CD8-positive, alpha-beta T cell (primary cell): ENCODE measurements at regions of chr6 and their contacts with region 1.

Region 1: DNA sequence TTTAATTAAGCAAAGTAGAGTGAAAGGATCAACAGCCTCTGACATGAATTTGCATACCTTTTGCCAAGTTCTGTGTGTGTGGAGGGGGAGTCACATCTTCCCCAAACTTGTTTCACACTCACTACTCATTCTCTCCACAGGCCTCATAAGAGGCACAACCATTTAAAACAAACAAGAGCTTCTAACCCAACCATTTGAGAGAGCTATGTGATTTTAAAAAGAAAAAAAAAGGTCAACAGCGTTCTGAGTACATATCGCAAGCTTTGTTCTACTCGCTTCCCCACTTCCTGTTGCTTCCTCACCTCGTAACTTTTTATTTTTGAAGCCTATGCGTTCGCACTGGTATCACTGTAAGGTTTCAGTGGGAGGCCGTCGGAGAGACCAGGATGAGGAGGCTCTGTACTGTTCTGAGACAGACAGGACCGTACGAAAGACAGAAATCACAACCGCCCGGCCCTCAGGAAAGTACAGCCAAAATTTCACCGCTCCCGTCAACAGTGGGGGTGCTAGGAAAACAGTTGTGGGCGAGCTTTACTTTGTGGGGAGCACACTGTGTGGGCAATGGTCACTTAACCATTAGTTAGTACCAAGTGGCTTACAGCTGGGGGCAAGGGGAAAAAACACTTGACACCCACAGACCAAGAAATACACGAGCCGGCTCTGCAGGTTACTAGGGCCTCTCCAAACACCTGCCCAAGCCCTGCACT is 61.3 kb downstream of the TRERF1 start:
- DNase-seq: peak; percentile 22 to 88 (median 62)
- ATAC-seq: peak; percentile 77
- H3K4me3 ChIP-seq: peak overlapping the region; percentile 10 to 31
- H3K4me3 Mint-ChIP-seq: peak overlapping the region; percentile 80
- H3K27ac ChIP-seq: peak overlapping the region; percentile 74 to 86
- H3K27ac Mint-ChIP-seq: peak overlapping the region; percentile 100
- H3K4me1 ChIP-seq: peaks cover 99% of the 10 kb centered on the region
- H3K4me1 Mint-ChIP-seq: peaks cover 97% of the 10 kb centered on the region
- H3K27me3 ChIP-seq: no peaks in the 10 kb centered on the region
- H3K27me3 Mint-ChIP-seq: no peaks in the 10 kb centered on the region
- CTCF ChIP-seq: no peak

Region 2: GRCh38 chr6:42260972-42261371 is 129.4 kb before region 1 on chr6:
- CTCF ChIA-PET with region 1: interaction called, 11 read pairs
- POLR2A ChIA-PET with region 1: interaction called, 3 read pairs
- intact Hi-C with region 1: no loop called
- DNase-seq: peak in 6 of 9 experiments; percentile 35 to 70 (median 53)
- ATAC-seq: peak; percentile 81
- H3K4me3 ChIP-seq: no peak overlapping the region
- H3K4me3 Mint-ChIP-seq: no peak overlapping the region
- H3K27ac ChIP-seq: no peak overlapping the region
- H3K27ac Mint-ChIP-seq: peak overlapping the region; percentile 45
- H3K4me1 ChIP-seq: peaks cover 3% of the 10 kb centered on the region
- H3K4me1 Mint-ChIP-seq: peaks cover 12% of the 10 kb centered on the region
- H3K27me3 ChIP-seq: no peaks in the 10 kb centered on the region
- H3K27me3 Mint-ChIP-seq: no peaks in the 10 kb centered on the region
- CTCF ChIP-seq: peak; percentile 49

Region 3: DNA sequence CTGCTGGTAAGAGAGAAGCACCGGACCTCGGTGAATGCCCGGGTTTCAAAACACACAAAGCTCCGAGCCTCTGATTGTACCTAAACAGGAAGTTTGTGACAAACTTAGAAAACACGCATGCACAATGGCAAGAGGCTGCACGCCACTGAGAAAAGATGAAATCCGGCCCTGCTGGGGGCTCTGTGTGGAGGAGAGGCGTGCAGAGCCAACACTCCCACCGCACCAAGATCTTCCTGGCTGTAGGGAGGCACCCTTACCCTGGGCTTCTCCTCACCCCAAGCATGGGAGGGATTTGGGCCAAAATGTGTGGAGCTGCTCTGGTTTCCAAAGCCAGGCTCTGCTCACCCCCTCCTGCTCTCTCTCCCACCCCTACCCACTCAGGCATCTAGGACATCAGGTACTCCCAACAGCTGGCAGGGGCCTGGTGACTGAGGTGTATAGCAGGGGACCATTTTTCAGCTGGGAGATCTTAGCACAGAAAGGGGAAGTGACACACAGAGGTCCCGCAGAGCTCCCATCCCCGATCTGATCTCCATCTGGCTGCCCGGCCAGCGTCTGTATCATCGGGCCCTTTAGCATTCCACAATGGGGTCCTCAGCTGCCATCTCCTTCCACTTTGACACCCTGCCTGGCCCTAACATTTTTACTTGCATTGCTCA is 22.9 kb before region 1 on chr6:
- CTCF ChIA-PET with region 1: interaction called, 4 read pairs
- POLR2A ChIA-PET with region 1: interaction called, 60 read pairs
- intact Hi-C with region 1: loop called (anchors 1 to 2 kb)
- DNase-seq: peak in 5 of 9 experiments; percentile 17 to 66 (median 44)
- ATAC-seq: peak; percentile 36
- H3K4me3 ChIP-seq: peak overlapping the region; percentile 22 to 28
- H3K4me3 Mint-ChIP-seq: peak overlapping the region; percentile 81
- H3K27ac ChIP-seq: peak overlapping the region; percentile 44 to 82
- H3K27ac Mint-ChIP-seq: peak overlapping the region; percentile 92
- H3K4me1 ChIP-seq: peaks cover 61% of the 10 kb centered on the region
- H3K4me1 Mint-ChIP-seq: peaks cover 84% of the 10 kb centered on the region
- H3K27me3 ChIP-seq: no peaks in the 10 kb centered on the region
- H3K27me3 Mint-ChIP-seq: no peaks in the 10 kb centered on the region
- CTCF ChIP-seq: no peak

Region 4: GRCh38 chr6:42402184-42402583 is 11.8 kb after region 1 on chr6:
- CTCF ChIA-PET with region 1: interaction called, 30 read pairs
- POLR2A ChIA-PET with region 1: interaction called, 15 read pairs
- intact Hi-C with region 1: loop called in 1 of 2 experiments (anchors 1 kb)
- DNase-seq: peak in 6 of 9 experiments; percentile 34 to 65 (median 46)
- ATAC-seq: peak; percentile 75
- H3K4me3 ChIP-seq: no peak overlapping the region
- H3K4me3 Mint-ChIP-seq: peak overlapping the region; percentile 2
- H3K27ac ChIP-seq: peak overlapping the region in 1 of 2 experiments; percentile 59
- H3K27ac Mint-ChIP-seq: peak overlapping the region; percentile 67
- H3K4me1 ChIP-seq: peaks cover 54% of the 10 kb centered on the region
- H3K4me1 Mint-ChIP-seq: peaks cover 86% of the 10 kb centered on the region
- H3K27me3 ChIP-seq: no peaks in the 10 kb centered on the region
- H3K27me3 Mint-ChIP-seq: no peaks in the 10 kb centered on the region
- CTCF ChIP-seq: no peak

Region 5: GRCh38 chr6:42428326-42429041 is 38.1 kb after region 1 on chr6:
- CTCF ChIA-PET with region 1: interaction called, 7 read pairs
- POLR2A ChIA-PET with region 1: interaction called, 14 read pairs
- intact Hi-C with region 1: loop called in 1 of 2 experiments (anchors 5 kb)
- DNase-seq: peak in 6 of 9 experiments; percentile 30 to 79 (median 58)
- ATAC-seq: peak; percentile 86
- H3K4me3 ChIP-seq: no peak overlapping the region
- H3K4me3 Mint-ChIP-seq: peak overlapping the region; percentile 50
- H3K27ac ChIP-seq: peak overlapping the region in 1 of 2 experiments; percentile 72
- H3K27ac Mint-ChIP-seq: peak overlapping the region; percentile 92
- H3K4me1 ChIP-seq: peaks cover 27% of the 10 kb centered on the region
- H3K4me1 Mint-ChIP-seq: peaks cover 68% of the 10 kb centered on the region
- H3K27me3 ChIP-seq: no peaks in the 10 kb centered on the region
- H3K27me3 Mint-ChIP-seq: no peaks in the 10 kb centered on the region
- CTCF ChIP-seq: no peak

Region 6: GRCh38 chr6:42493914-42494539 is 103.6 kb after region 1 on chr6:
- CTCF ChIA-PET with region 1: no interaction called
- POLR2A ChIA-PET with region 1: no interaction called
- intact Hi-C with region 1: no loop called
- DNase-seq: no peak
- ATAC-seq: no peak
- H3K4me3 ChIP-seq: no peak overlapping the region
- H3K4me3 Mint-ChIP-seq: no peak overlapping the region
- H3K27ac ChIP-seq: no peak overlapping the region
- H3K27ac Mint-ChIP-seq: no peak overlapping the region
- H3K4me1 ChIP-seq: no peaks in the 10 kb centered on the region
- H3K4me1 Mint-ChIP-seq: no peaks in the 10 kb centered on the region
- H3K27me3 ChIP-seq: no peaks in the 10 kb centered on the region
- H3K27me3 Mint-ChIP-seq: no peaks in the 10 kb centered on the region
- CTCF ChIP-seq: no peak

Region 7: GRCh38 chr6:42520786-42521607 is 130.6 kb after region 1 on chr6:
- CTCF ChIA-PET with region 1: no interaction called
- POLR2A ChIA-PET with region 1: no interaction called
- intact Hi-C with region 1: no loop called
- DNase-seq: peak in 1 of 9 experiments; percentile 7
- ATAC-seq: no peak
- H3K4me3 ChIP-seq: no peak overlapping the region
- H3K4me3 Mint-ChIP-seq: no peak overlapping the region
- H3K27ac ChIP-seq: no peak overlapping the region
- H3K27ac Mint-ChIP-seq: no peak overlapping the region
- H3K4me1 ChIP-seq: no peaks in the 10 kb centered on the region
- H3K4me1 Mint-ChIP-seq: no peaks in the 10 kb centered on the region
- H3K27me3 ChIP-seq: no peaks in the 10 kb centered on the region
- H3K27me3 Mint-ChIP-seq: no peaks in the 10 kb centered on the region
- CTCF ChIP-seq: no peak